ENCODE measurements at regions of chr12 and their contacts with region 1.

Region 1: GRCh38 chr12:49636979-49637755 is 13.8 kb downstream of the PRPF40B start:
- DNase-seq: no peak
- H3K4me3 ChIP-seq: no peak overlapping the region
- CTCF ChIP-seq: peak; percentile 80

Region 2: DNA sequence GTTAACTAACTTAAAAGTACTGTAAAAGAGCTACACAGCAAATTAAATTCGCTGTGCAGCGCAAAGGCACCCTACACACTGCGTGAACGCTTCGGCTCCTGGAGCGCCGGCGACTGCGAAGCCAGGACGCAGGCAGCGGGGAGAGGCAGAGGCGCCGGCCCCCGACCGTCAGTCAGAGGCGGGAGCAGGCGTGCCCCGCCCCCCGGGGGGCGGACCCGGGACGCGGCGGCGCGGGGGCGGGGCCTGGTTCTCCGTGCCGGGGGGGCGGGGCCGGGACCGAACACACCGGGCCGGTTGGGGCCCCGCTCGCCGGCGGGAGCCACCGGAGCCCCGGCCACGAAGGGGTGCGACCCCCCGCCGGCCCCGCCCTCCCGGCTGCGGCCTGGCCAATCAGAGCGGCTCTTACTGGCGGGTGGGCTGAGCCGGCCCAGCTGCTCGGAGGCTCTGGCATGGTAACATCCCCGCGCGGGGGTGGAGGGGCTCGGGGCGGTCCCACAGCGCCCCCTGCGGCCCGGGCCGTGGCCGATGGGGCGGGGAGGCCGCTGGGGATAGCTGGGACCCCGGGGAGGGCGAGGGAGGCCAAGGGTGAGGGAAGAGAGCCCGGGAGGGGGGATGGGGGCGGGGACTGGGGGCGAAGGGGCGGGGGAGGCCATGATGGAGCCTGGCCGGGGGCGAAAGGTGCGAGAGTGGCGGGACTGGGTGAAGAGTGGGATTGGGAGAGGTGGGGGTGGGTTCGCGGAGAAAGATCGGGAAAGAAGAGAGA is 13.8 kb before region 1 on chr12 and contains the start of gene PRPF40B:
- CTCF ChIA-PET with region 1: interaction called, 300 read pairs
- POLR2A ChIA-PET with region 1: interaction called, 3 read pairs
- DNase-seq: no peak
- H3K4me3 ChIP-seq: peak within 1 kb of the TSS; percentile 65
- CTCF ChIP-seq: peak; percentile 75

Region 3: GRCh38 chr12:49673446-49674317 is 36.5 kb after region 1 on chr12:
- CTCF ChIA-PET with region 1: interaction called, 16 read pairs
- POLR2A ChIA-PET with region 1: no interaction called
- DNase-seq: no peak
- H3K4me3 ChIP-seq: peak overlapping the region; percentile 16; the same call in 1 of the 2 replicates
- CTCF ChIP-seq: peak; percentile 36

Region 4: GRCh38 chr12:49740930-49741881 is 104.0 kb after region 1 on chr12 and contains the start of gene TMBIM6:
- CTCF ChIA-PET with region 1: interaction called, 23 read pairs
- POLR2A ChIA-PET with region 1: no interaction called
- DNase-seq: peak; percentile 100
- H3K4me3 ChIP-seq: peak within 1 kb of the TSS; percentile 91
- CTCF ChIP-seq: peak; percentile 91

Region 5: DNA sequence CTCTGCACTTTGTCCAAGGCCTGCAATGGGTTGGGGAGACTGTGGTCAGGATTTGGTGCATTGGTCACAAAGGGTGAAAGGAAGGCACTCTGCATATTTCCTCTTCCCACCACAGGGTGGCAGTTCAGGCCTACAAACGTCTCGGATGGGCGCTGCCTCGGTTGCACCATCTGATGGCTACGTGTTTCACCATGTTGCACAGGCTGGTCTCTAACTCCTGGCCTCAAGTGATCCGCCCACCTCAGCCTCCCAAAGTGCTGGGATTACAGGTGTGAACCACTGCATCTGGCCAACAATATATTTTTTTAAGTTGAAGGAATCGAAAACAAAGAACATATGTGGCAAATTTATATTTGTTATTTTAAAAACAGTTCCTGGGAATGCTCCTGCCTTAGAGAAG is 139.2 kb after region 1 on chr12:
- CTCF ChIA-PET with region 1: interaction called, 16 read pairs
- POLR2A ChIA-PET with region 1: no interaction called
- DNase-seq: no peak
- H3K4me3 ChIP-seq: no peak overlapping the region
- CTCF ChIP-seq: peak; percentile 83

Region 6: DNA sequence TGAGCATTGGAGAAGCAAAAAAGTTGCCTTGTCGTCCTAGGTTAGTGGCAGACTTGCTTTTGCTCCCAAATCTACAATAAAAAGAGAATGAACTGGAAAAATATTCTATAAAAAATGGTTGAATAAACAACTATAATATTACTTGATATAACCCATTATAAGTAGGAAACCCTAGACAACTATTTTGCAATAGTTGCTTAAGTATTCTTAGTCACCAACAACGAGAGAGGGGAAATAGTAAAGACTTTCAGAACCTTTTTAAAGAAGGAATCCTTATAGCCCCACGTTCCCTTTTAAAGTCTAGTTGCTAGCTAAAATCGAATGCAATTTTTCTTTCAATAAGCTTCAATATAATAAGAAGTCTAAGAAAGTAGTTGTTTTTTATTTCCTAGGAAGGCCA is 353.1 kb after region 1 on chr12:
- CTCF ChIA-PET with region 1: no interaction called
- POLR2A ChIA-PET with region 1: no interaction called
- DNase-seq: no peak
- H3K4me3 ChIP-seq: no peak overlapping the region
- CTCF ChIP-seq: no peak